Activated T-helper 2 cell treated with anti-CD3 and anti-CD28 coated beads, Interferon-gamma antibody, Interleukin-2, Interleukin-4, amounts not matched to agents 10 μg/mL and 5 μg/mL and 100 μg/mL, durations not matched to agents 14 hours and 24 hours and 36 hours (primary cell): ENCODE measurements at regions of chr11 and their contacts with region 1.

Region 1: DNA sequence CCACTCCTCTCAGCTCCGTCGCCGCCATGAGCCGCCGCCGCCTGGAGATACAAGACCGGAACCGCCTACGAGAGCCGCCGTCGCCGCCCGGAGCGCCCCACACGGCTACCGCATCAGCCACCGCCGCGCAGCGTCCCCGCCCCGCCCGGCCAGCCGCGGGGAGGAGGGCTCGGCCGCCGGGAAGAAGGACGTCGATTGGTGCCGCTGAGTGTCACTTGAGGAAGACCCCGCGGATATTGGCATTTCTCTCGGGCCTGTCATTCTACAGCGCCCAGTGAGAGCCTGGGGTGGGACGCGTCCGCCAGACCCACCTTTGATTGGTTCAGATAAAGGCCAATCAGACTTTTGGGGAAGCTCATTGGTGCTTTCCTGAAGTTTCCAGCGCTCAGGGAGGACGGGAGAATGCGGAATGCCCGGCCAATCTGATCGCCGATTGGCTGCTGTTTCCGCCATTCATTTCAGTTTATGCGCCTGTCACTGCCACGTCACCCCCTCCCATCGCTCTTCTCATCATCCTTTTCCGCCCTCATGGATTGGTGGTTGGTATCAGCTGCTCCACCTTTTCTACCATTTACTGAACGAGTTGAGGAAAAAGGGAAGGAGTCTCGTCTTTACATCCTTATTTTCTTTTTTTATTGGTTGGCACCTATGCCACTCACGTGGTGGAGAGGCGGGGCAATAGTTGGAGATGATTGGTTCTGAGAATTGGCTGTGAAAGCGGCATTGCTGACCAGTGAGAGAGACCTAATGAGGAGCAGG is at the start of gene OSBP:
- DNase-seq: peak; percentile 99
- H3K4me3 Mint-ChIP-seq: peak within 1 kb of the TSS; percentile 100
- H3K27ac Mint-ChIP-seq: peak within 1 kb of the TSS; percentile 99
- H3K4me1 Mint-ChIP-seq: peaks cover 47% of the 10 kb centered on the region
- H3K27me3 Mint-ChIP-seq: no peaks in the 10 kb centered on the region
- total RNA-seq, gene OSBP: 42.8 and 43.4 TPM in 2 replicates

Region 2: DNA sequence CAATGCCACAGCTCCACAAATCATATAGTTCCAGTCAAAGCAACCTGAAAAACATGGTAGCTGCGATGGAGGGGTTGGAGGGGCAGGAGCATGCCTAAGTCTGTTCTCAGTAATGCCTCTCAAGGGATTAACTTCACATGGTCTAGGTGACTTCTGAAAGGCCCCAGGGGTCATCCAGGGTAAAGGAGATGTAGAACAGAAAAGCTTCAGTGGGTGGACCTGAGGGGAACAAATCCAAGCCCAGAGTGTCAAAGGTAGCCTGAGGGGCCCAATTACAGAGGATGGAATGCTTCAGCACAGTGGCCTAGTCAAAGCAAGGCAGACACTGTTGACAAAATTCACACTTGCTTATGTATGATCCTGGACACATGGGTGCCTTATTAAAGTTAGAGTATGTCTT is 81.1 kb before region 1 on chr11:
- intact Hi-C with region 1: loop called (anchors 5 kb)
- DNase-seq: no peak
- H3K4me3 Mint-ChIP-seq: no peak overlapping the region
- H3K27ac Mint-ChIP-seq: no peak overlapping the region
- H3K4me1 Mint-ChIP-seq: peaks cover 7% of the 10 kb centered on the region
- H3K27me3 Mint-ChIP-seq: peaks cover 2% of the 10 kb centered on the region

Region 3: GRCh38 chr11:59560702-59561469 is 54.9 kb before region 1 on chr11:
- intact Hi-C with region 1: loop called (anchors 1 kb)
- DNase-seq: peak; percentile 63
- H3K4me3 Mint-ChIP-seq: peak overlapping the region; percentile 90
- H3K27ac Mint-ChIP-seq: peak overlapping the region; percentile 93
- H3K4me1 Mint-ChIP-seq: peaks cover 47% of the 10 kb centered on the region
- H3K27me3 Mint-ChIP-seq: no peaks in the 10 kb centered on the region

Region 4: GRCh38 chr11:59668950-59669610 is 53.3 kb after region 1 on chr11 and contains the start of gene PATL1:
- intact Hi-C with region 1: loop called (anchors 1 kb)
- DNase-seq: peak; percentile 99
- H3K4me3 Mint-ChIP-seq: peak within 1 kb of the TSS; percentile 97
- H3K27ac Mint-ChIP-seq: peak within 1 kb of the TSS; percentile 98
- H3K4me1 Mint-ChIP-seq: peaks cover 36% of the 10 kb centered on the region
- H3K27me3 Mint-ChIP-seq: no peaks in the 10 kb centered on the region
- total RNA-seq, gene PATL1: 69.0 and 71.2 TPM in 2 replicates

Region 5: GRCh38 chr11:59753650-59754493 is 138.1 kb after region 1 on chr11:
- intact Hi-C with region 1: loop called (anchors 2 kb)
- DNase-seq: peak; percentile 73
- H3K4me3 Mint-ChIP-seq: peak overlapping the region; percentile 92
- H3K27ac Mint-ChIP-seq: peak overlapping the region; percentile 50
- H3K4me1 Mint-ChIP-seq: peaks cover 15% of the 10 kb centered on the region
- H3K27me3 Mint-ChIP-seq: peaks cover 23% of the 10 kb centered on the region

Region 6: DNA sequence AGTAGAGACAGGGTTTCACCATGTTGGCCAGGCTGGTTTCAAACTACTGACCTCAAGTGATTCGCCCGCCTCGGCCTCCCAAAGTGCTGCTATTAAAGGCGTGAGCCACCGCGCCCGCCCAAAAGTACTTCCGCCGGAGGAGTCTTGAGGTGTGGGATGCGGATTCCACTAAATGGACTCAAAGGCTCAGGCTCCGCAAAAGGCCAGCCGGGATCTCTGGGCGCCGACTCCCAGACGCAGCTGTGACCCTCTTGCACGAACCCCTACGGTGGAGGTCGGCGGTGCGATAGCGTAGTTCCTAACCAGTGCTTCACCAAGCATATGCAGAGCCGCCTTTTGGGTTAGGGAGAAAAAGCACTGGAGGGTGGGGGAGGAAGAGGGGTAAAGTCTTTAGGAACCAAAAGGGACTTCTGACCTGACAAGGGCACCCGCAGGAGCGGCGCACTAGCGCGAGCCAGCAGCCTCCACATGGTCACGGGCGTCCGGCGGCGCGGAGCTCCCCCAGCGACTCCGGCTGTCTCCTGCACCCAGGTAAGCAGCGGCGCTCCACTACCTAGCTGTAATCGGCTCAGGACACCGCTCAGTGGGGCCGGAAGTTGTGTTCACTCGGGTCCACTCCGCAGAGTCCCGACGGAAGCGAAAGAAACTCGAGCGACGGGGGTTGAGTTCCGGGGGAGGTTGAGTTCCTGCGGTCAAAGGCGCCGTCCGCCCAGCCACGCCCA is 194.5 kb after region 1 on chr11 and contains the start of gene MRPL16:
- intact Hi-C with region 1: loop called (anchors 1 kb)
- DNase-seq: peak; percentile 85
- H3K4me3 Mint-ChIP-seq: peak within 1 kb of the TSS; percentile 94
- H3K27ac Mint-ChIP-seq: peak within 1 kb of the TSS; percentile 84
- H3K4me1 Mint-ChIP-seq: peaks cover 22% of the 10 kb centered on the region
- H3K27me3 Mint-ChIP-seq: no peaks in the 10 kb centered on the region
- total RNA-seq, gene MRPL16: 87.7 and 90.4 TPM in 2 replicates

Region 7: GRCh38 chr11:59857444-59858434 is 241.9 kb after region 1 on chr11:
- intact Hi-C with region 1: loop called (anchors 5 kb)
- DNase-seq: peak; percentile 11
- H3K4me3 Mint-ChIP-seq: peak overlapping the region; percentile 19
- H3K27ac Mint-ChIP-seq: peak overlapping the region; percentile 95
- H3K4me1 Mint-ChIP-seq: peaks cover 41% of the 10 kb centered on the region
- H3K27me3 Mint-ChIP-seq: no peaks in the 10 kb centered on the region